ENCODE measurements at regions of chr9 and their contacts with region 1.

Region 1: DNA sequence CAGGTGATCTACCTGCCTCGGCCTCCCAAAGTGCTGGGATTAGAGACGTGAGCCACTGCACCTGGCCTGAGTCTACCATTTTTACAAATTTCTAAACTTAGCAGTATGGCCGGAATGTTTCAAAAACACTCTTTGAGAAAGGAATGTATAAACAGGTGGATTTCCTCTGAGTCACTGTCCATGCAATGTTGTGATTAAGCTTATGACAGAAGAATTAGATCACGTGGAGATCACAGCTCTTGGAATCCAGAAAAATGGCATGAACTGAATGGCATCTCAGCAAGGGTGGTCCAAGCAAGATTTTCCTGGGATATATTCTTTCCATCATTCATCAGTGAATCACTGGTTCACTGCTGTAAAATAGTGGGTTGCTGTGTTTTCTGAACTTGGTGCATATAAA is 865.0 kb downstream of the PTPRD start:
- DNase-seq: peak; percentile 75
- H3K4me3 ChIP-seq: no peak overlapping the region
- H3K27ac ChIP-seq: peak overlapping the region; percentile 46
- H3K4me1 ChIP-seq: peaks cover 42% of the 10 kb centered on the region
- H3K27me3 ChIP-seq: no peaks in the 10 kb centered on the region
- CTCF ChIP-seq: no peak
- POLR2A ChIP-seq: no peak

Region 2: GRCh38 chr9:9730174-9730573 is 17.6 kb before region 1 on chr9:
- CTCF ChIA-PET with region 1: no interaction called
- POLR2A ChIA-PET with region 1: no interaction called
- dilution Hi-C with region 1: no loop called
- intact Hi-C with region 1: no loop called
- DNase-seq: no peak
- H3K4me3 ChIP-seq: no peak overlapping the region
- H3K27ac ChIP-seq: no peak overlapping the region
- H3K4me1 ChIP-seq: no peaks in the 10 kb centered on the region
- H3K27me3 ChIP-seq: no peaks in the 10 kb centered on the region
- CTCF ChIP-seq: no peak
- POLR2A ChIP-seq: no peak

Region 3: DNA sequence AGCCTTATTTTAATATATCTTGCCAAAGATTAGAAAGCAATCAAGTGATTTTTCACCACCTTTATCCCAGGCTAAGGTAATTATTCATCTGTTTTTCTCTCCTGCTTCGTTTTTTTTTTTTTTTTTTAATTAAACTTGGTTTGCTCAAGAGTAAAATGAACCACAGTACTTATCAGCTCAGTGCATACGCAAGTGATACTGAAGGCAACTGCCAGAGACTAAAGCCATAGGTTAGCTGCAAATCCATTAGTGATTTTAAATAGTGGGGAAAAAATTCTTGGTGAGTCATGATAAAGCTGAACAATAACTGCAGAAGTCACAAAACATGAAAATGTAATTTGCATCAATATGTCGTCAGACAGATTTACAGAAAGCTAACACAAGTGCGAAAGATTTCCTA is 35.9 kb after region 1 on chr9:
- CTCF ChIA-PET with region 1: interaction called, 4 read pairs
- POLR2A ChIA-PET with region 1: no interaction called
- dilution Hi-C with region 1: no loop called
- intact Hi-C with region 1: loop called (anchors 1 kb)
- DNase-seq: peak; percentile 29
- H3K4me3 ChIP-seq: no peak overlapping the region
- H3K27ac ChIP-seq: peak overlapping the region; percentile 45
- H3K4me1 ChIP-seq: peaks cover 21% of the 10 kb centered on the region
- H3K27me3 ChIP-seq: no peaks in the 10 kb centered on the region
- CTCF ChIP-seq: no peak
- POLR2A ChIP-seq: no peak